Cardiac septum (tissue), 1 donor: ENCODE measurements at regions of chr14 and their contacts with region 1.

Region 1: DNA sequence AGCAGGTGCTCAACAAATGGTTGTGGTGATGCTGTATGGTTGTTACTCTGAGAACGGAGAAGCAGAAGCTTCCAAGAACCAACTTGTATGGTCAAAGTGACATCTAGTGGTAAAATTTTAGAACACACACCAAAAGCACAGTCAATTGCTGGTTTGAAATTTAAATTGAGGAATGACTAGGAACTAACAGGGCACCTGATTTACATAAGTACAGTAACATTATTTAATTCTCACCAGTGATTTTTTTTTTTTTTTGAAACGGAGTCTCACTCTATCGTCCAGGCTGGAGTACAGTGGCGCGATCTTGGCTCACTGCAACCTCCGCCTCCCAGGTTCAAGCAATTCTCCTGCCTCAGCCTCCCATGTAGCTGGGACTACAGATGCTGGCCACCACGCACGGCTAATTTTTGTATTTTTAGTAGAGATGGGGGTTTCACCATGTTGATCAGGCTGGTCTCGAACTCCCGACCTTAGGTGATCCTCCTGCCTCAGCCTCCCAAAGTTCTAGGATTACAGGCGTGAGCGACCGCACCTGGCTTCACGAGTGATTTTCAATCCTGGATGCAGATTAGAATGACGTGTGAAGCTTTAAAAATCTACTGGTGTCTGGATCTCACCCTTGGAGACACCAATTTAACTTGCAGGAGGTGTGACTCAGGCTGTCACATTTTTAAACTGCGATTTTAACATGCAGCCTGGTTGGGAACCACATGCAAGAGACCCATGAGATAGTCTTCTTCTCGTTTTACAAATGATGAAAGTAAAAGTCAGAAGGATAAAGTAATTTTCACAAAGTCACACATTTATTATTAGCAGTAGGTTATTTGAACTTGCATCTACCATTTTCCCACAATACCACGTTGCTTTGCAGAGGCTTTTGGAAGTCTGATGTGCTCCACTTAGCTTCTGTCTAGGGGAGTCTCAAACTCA is 14.1 kb upstream of the NUMB start:
- DNase-seq: no peak

Region 2: GRCh38 chr14:73176685-73177084 is 295.8 kb before region 1 on chr14:
- intact Hi-C with region 1: loop called (anchors 5 kb)
- DNase-seq: no peak

Region 3: DNA sequence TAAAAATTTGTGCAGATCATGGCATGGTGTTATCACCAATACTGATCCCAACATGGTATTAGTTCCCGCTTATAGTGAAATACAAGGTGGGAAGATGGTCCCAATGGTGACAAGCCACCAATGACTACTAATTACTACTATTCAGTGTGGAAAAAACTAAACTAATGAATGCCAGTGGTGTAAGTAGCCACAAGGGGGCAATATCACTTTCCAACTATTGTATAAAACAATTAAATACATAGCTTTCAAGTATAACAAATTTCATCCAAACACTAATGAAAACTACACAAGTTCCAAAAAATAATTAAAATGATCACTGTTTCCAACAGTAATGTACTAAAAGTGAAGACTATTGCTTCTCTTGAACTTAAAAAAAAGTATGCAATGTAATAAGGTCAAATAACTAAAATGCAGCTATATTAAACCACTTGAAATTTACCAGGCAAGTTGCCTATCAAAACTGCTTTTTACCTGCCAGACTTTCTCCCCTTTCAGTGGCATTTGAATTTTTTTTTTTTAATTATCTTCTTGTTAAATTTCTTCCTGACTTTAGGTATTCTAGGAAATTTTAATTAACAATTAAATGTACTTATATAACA is 177.2 kb before region 1 on chr14:
- intact Hi-C with region 1: loop called (anchors 2 kb)
- DNase-seq: no peak

Region 4: DNA sequence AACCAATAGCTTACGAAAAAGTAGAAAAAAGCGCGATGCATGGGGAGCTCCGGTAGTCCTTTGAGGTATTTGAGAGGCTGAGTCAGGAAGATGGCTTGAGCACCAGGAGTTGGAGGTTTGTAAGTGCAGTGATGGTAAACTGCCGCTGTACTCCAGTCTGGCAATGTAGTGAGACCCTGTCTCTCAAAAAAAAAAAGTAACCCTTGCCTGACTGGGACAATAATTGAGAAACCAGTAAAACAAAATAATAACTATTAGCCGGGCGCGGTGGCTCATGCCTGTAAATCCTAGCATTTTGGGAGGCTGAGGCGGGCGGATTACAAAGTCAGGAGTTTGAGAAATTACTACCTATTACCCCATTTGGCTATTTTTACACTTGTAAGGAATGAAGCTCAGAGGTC is 95.9 kb after region 1 on chr14:
- intact Hi-C with region 1: no loop called
- DNase-seq: no peak